B cell (primary cell): ENCODE measurements at regions of chr12 and their contacts with region 1.

Region 1: GRCh38 chr12:120686690-120687577 is at the start of gene MLEC:
- DNase-seq: no peak
- ATAC-seq: peak; percentile 77
- H3K4me3 ChIP-seq: peak within 1 kb of the TSS; percentile 78 to 91 (median 81)
- H3K4me3 Mint-ChIP-seq: peak within 1 kb of the TSS; percentile 93
- H3K27ac ChIP-seq: peak within 1 kb of the TSS; percentile 84 to 87
- H3K27ac Mint-ChIP-seq: peak within 1 kb of the TSS; percentile 96
- H3K4me1 ChIP-seq: peaks cover 41 to 46% of the 10 kb centered on the region in 2 donors
- H3K4me1 Mint-ChIP-seq: peaks cover 49% of the 10 kb centered on the region
- H3K27me3 ChIP-seq: no peaks in the 10 kb centered on the region
- H3K27me3 Mint-ChIP-seq: no peaks in the 10 kb centered on the region
- CTCF ChIP-seq: no peak
- total RNA-seq, gene MLEC: 39.8 and 52.6 TPM in 2 replicates

Region 2: DNA sequence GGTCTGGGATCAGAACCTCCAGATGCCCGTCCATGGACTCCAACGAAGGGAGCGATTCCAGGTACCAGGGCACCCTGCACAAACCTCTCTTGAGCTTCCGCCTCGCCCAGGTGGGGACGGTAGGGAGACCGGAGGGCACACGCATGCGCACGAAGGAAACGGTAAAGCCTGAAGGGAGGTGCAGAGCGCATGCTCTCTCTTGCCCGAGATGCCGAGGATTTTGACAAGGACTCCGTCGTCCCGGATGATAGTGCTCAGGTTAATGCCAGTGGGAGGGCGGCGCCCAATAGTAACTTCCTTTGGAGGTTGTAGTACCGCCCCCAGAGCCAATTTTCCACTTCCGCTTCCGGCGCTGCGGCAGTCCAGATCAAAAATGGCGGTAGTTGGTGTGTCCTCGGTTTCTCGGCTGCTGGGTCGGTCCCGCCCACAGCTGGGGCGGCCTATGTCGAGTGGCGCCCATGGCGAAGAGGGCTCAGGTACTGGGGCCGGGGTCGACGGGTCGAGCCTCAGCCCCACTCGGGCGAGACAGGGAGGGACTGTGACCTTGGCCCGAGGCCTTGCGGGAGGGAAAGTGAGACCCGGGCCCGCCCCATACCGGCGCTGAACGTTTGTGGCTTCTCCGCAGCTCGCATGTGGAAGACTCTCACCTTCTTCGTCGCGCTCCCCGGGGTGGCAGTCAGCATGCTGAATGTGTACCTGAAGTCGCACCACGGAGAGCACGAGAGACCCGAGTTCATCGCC is 249.0 kb before region 1 on chr12 and contains the start of gene COX6A1:
- CTCF ChIA-PET with region 1: interaction called, 5 read pairs
- POLR2A ChIA-PET with region 1: no interaction called
- intact Hi-C with region 1: loop called (anchors 1 kb)
- DNase-seq: peak; percentile 98
- ATAC-seq: peak; percentile 96
- H3K4me3 ChIP-seq: peak within 1 kb of the TSS; percentile 73 to 86 (median 83)
- H3K4me3 Mint-ChIP-seq: peak within 1 kb of the TSS; percentile 91
- H3K27ac ChIP-seq: peak within 1 kb of the TSS; percentile 70 to 84
- H3K27ac Mint-ChIP-seq: peak within 1 kb of the TSS; percentile 96
- H3K4me1 ChIP-seq: peaks cover 18 to 20% of the 10 kb centered on the region in 2 donors
- H3K4me1 Mint-ChIP-seq: peaks cover 26% of the 10 kb centered on the region
- H3K27me3 ChIP-seq: peaks cover 0 to 5% (median 2%) of the 10 kb centered on the region in 4 experiments
- H3K27me3 Mint-ChIP-seq: peaks cover 8% of the 10 kb centered on the region
- CTCF ChIP-seq: peak; percentile 9
- total RNA-seq, gene COX6A1: 132 and 137 TPM in 2 replicates

Region 3: GRCh38 chr12:120554678-120555077 is 132.3 kb before region 1 on chr12:
- CTCF ChIA-PET with region 1: no interaction called
- POLR2A ChIA-PET with region 1: no interaction called
- intact Hi-C with region 1: no loop called
- DNase-seq: no peak
- ATAC-seq: no peak
- H3K4me3 ChIP-seq: no peak overlapping the region
- H3K4me3 Mint-ChIP-seq: no peak overlapping the region
- H3K27ac ChIP-seq: no peak overlapping the region
- H3K27ac Mint-ChIP-seq: no peak overlapping the region
- H3K4me1 ChIP-seq: peaks cover 0 to 5% of the 10 kb centered on the region in 2 donors
- H3K4me1 Mint-ChIP-seq: peaks cover 6% of the 10 kb centered on the region
- H3K27me3 ChIP-seq: no peaks in the 10 kb centered on the region
- H3K27me3 Mint-ChIP-seq: no peaks in the 10 kb centered on the region
- CTCF ChIP-seq: no peak

Region 4: DNA sequence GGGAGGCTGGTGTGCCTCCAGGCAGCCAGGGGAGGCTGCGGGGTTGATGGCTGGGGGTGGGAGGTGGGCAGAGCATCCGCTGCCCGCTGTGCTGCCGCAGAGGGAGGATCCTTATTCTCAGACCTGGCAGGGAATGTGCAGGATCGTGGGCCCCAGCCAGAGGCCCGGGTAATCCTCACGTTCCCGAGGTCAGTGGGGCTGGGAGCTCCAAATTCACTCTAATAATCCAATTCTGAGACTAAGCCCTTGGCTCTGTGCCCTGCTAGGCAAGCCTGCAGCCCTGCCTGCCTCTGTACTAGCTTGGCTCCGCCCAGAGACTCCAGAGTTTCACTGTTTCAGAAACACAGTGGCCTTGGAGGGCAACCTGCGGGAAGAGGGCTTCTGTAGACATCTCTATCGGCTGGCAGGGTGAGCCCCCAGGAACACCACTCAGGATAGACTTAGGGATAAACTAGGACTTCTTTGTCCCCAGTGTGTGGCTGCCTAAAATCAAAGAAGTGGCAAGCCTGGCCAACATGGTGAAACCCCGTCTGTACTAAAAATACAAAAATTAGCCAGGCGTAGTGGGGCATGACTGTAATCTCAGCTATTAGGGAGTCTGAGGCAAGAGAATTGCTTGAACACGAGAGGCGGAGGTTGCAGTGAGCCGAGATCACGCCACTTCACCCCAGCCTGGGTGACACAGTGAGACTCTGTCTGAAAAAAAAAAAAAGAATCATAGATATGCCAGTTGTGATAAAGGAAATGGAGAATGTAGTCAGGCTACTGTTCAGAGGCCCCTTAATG is 17.7 kb before region 1 on chr12:
- CTCF ChIA-PET with region 1: interaction called, 7 read pairs
- POLR2A ChIA-PET with region 1: interaction called, 5 read pairs
- intact Hi-C with region 1: loop called (anchors 1 kb)
- DNase-seq: peak; percentile 79
- ATAC-seq: peak; percentile 74
- H3K4me3 ChIP-seq: peak overlapping the region in 2 of 5 experiments; percentile 5 to 33
- H3K4me3 Mint-ChIP-seq: peak overlapping the region; percentile 77
- H3K27ac ChIP-seq: peak overlapping the region in 1 of 2 donors; percentile 23
- H3K27ac Mint-ChIP-seq: peak overlapping the region; percentile 86
- H3K4me1 ChIP-seq: peaks cover 58 to 66% of the 10 kb centered on the region in 2 donors
- H3K4me1 Mint-ChIP-seq: peaks cover 67% of the 10 kb centered on the region
- H3K27me3 ChIP-seq: peaks cover 0 to 4% (median 2%) of the 10 kb centered on the region in 4 experiments
- H3K27me3 Mint-ChIP-seq: peaks cover 8% of the 10 kb centered on the region
- CTCF ChIP-seq: no peak

Region 5: GRCh38 chr12:120725659-120726509 is 39.0 kb after region 1 on chr12 and contains the start of gene ACADS:
- CTCF ChIA-PET with region 1: no interaction called
- POLR2A ChIA-PET with region 1: no interaction called
- intact Hi-C with region 1: loop called (anchors 1 kb)
- DNase-seq: peak; percentile 91
- ATAC-seq: peak; percentile 100
- H3K4me3 ChIP-seq: peak within 1 kb of the TSS; percentile 44 to 73 (median 63)
- H3K4me3 Mint-ChIP-seq: peak within 1 kb of the TSS; percentile 90
- H3K27ac ChIP-seq: peak within 1 kb of the TSS in 1 of 2 donors; percentile 61
- H3K27ac Mint-ChIP-seq: peak within 1 kb of the TSS; percentile 46
- H3K4me1 ChIP-seq: peaks cover 28 to 30% of the 10 kb centered on the region in 2 donors
- H3K4me1 Mint-ChIP-seq: peaks cover 34% of the 10 kb centered on the region
- H3K27me3 ChIP-seq: no peaks in the 10 kb centered on the region
- H3K27me3 Mint-ChIP-seq: no peaks in the 10 kb centered on the region
- CTCF ChIP-seq: no peak
- total RNA-seq, gene ACADS: 10.0 and 10.1 TPM in 2 replicates

Region 6: GRCh38 chr12:120904197-120904773 is 217.4 kb after region 1 on chr12 and contains the start of gene SPPL3:
- CTCF ChIA-PET with region 1: no interaction called
- POLR2A ChIA-PET with region 1: no interaction called
- intact Hi-C with region 1: loop called (anchors 1 kb)
- DNase-seq: peak; percentile 94
- ATAC-seq: peak; percentile 83
- H3K4me3 ChIP-seq: peak within 1 kb of the TSS; percentile 32 to 85 (median 75)
- H3K4me3 Mint-ChIP-seq: peak within 1 kb of the TSS; percentile 97
- H3K27ac ChIP-seq: peak within 1 kb of the TSS; percentile 54 to 80
- H3K27ac Mint-ChIP-seq: peak within 1 kb of the TSS; percentile 95
- H3K4me1 ChIP-seq: peaks cover 19 to 24% of the 10 kb centered on the region in 2 donors
- H3K4me1 Mint-ChIP-seq: peaks cover 29% of the 10 kb centered on the region
- H3K27me3 ChIP-seq: no peaks in the 10 kb centered on the region
- H3K27me3 Mint-ChIP-seq: no peaks in the 10 kb centered on the region
- CTCF ChIP-seq: no peak
- total RNA-seq, gene SPPL3: 43.6 and 53.7 TPM in 2 replicates

Region 7: GRCh38 chr12:121888478-121889266 is 1201.7 kb after region 1 on chr12 and contains the start of gene PSMD9:
- CTCF ChIA-PET with region 1: no interaction called
- POLR2A ChIA-PET with region 1: no interaction called
- intact Hi-C with region 1: loop called (anchors 5 kb)
- DNase-seq: peak; percentile 98
- ATAC-seq: peak; percentile 96
- H3K4me3 ChIP-seq: peak within 1 kb of the TSS; percentile 70 to 92 (median 78)
- H3K4me3 Mint-ChIP-seq: peak within 1 kb of the TSS; percentile 99
- H3K27ac ChIP-seq: peak within 1 kb of the TSS; percentile 86 to 95
- H3K27ac Mint-ChIP-seq: peak within 1 kb of the TSS; percentile 99
- H3K4me1 ChIP-seq: peaks cover 15 to 19% of the 10 kb centered on the region in 2 donors
- H3K4me1 Mint-ChIP-seq: peaks cover 32% of the 10 kb centered on the region
- H3K27me3 ChIP-seq: peaks cover 0 to 5% (median 0%) of the 10 kb centered on the region in 4 experiments
- H3K27me3 Mint-ChIP-seq: no peaks in the 10 kb centered on the region
- CTCF ChIP-seq: peak; percentile 68
- total RNA-seq, gene PSMD9: 37.1 and 38.2 TPM in 2 replicates